ENCODE measurements at regions of chr17 and their contacts with region 1.

Region 1: DNA sequence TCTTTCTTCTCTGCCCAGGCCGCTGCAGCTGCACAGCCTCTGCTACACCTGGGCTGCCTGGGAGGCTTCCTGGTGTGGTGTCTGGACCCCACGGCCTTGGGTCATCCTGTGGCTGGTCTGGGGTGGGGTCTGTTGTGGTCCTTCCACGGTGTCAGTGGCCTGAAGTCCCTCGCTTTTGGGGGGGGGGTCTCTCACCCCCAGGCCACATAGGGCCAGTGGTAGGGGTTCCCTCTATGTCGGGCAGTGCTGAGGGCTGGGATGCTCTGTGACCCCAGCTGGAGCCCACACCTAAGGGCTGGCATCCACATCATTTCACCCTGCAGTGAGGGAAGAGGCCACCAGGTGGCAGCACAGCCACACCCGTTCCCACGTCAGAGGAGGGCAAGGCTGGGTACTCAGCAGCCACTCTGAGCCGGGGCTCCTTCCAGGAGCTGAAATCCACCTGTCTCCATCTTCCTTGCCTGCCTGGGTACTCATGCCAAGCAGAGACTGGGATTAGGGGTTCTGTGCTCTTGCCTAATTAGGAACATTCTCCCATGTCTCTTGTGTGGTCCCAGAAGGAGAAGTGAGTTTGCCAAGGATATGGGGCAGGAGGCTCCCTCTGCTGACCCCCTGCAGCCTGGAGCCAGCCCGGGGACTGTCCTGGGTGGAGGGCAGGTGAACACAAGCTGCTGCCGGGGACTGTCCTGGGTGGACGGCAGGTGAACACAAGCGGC is 13.0 kb downstream of the ENGASE start:
- DNase-seq: peak; percentile 69 to 72
- H3K4me3 ChIP-seq: no peak overlapping the region
- H3K27ac ChIP-seq: no peak overlapping the region
- H3K4me1 ChIP-seq: no peaks in the 10 kb centered on the region
- H3K27me3 ChIP-seq: no peaks in the 10 kb centered on the region
- CTCF ChIP-seq: peak; percentile 84 to 92 (median 88)
- POLR2A ChIP-seq: no peak

Region 2: DNA sequence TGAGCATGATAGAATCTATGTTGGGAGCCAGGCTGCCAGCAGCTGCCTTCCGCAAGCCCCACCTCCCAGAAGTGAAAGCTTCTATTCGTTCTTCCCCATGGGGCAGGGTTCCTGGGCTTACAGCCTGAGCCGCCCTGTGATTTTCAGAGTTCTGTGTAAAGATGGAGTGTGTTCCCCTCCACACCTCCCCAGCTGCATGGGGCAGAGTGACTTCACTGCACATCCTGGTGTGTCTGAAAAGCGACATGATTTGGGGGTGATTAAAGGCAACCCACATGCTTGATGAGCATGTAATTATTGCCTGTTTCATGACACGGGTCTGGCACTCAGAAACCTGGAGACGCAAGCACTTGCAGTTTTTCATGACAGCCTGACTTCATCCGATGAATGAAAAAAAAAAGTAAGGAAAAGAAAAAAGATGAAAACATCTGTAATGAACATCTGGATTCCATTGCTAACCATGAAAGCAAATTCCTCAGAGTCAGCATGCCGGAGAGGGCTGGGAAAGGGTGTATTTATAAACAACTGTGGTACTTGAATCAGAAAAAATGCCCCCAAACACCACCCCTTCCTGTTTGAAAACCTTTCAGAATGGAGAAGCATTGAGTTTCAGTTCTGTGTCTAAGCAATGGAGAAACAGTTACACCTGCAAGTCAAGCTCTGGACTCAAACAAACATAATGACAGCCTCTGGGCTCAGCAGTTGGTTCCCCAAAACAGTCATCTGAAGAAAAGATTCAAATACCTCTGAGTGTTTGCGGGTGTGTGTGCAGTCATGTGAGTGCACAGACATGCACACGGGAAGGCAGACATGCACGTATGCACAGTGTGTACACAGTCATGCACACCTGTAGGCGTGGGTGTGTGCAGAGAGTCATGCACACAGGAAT is 253.0 kb after region 1 on chr17:
- intact Hi-C with region 1: no loop called
- DNase-seq: no peak
- H3K4me3 ChIP-seq: no peak overlapping the region
- H3K27ac ChIP-seq: no peak overlapping the region
- H3K4me1 ChIP-seq: no peaks in the 10 kb centered on the region
- H3K27me3 ChIP-seq: no peaks in the 10 kb centered on the region
- CTCF ChIP-seq: no peak
- POLR2A ChIP-seq: no peak

Region 3: GRCh38 chr17:79393358-79394202 is 306.0 kb after region 1 on chr17:
- intact Hi-C with region 1: loop called (anchors 5 kb)
- DNase-seq: peak; percentile 58 to 77
- H3K4me3 ChIP-seq: no peak overlapping the region
- H3K27ac ChIP-seq: no peak overlapping the region
- H3K4me1 ChIP-seq: peaks cover 0 to 6% of the 10 kb centered on the region in 2 donors
- H3K27me3 ChIP-seq: no peaks in the 10 kb centered on the region
- CTCF ChIP-seq: peak; percentile 70 to 91 (median 83)
- POLR2A ChIP-seq: no peak

Region 4: GRCh38 chr17:79707931-79708891 is 620.6 kb after region 1 on chr17:
- intact Hi-C with region 1: loop called (anchors 5 kb)
- DNase-seq: peak; percentile 57 to 64
- H3K4me3 ChIP-seq: peak overlapping the region in 1 of 2 donors; percentile 6
- H3K27ac ChIP-seq: peak overlapping the region; percentile 62 to 72
- H3K4me1 ChIP-seq: no peaks in the 10 kb centered on the region
- H3K27me3 ChIP-seq: no peaks in the 10 kb centered on the region
- CTCF ChIP-seq: peak; percentile 78 to 82 (median 80)
- POLR2A ChIP-seq: no peak

Measured in uterus (tissue), 4 donors.